ENCODE measurements at regions of chr20 and their contacts with region 1.

Region 1: GRCh38 chr20:59495894-59496510 is 108.3 kb upstream of the PHACTR3 start:
- DNase-seq: peak; percentile 65
- H3K4me3 Mint-ChIP-seq: no peak overlapping the region
- H3K27ac Mint-ChIP-seq: no peak overlapping the region
- H3K4me1 Mint-ChIP-seq: no peaks in the 10 kb centered on the region
- H3K27me3 Mint-ChIP-seq: peaks cover 71% of the 10 kb centered on the region
- CTCF ChIP-seq: peak; percentile 77

Region 2: GRCh38 chr20:58864350-58864749 is 631.7 kb before region 1 on chr20:
- CTCF ChIA-PET with region 1: interaction called, 43 read pairs
- POLR2A ChIA-PET with region 1: no interaction called
- intact Hi-C with region 1: no loop called
- DNase-seq: peak; percentile 21
- H3K4me3 Mint-ChIP-seq: no peak overlapping the region
- H3K27ac Mint-ChIP-seq: no peak overlapping the region
- H3K4me1 Mint-ChIP-seq: no peaks in the 10 kb centered on the region
- H3K27me3 Mint-ChIP-seq: peaks cover 68% of the 10 kb centered on the region
- CTCF ChIP-seq: peak; percentile 9

Region 3: GRCh38 chr20:59063358-59064213 is 432.4 kb before region 1 on chr20:
- CTCF ChIA-PET with region 1: interaction called, 13 read pairs
- POLR2A ChIA-PET with region 1: no interaction called
- intact Hi-C with region 1: no loop called
- DNase-seq: peak; percentile 85
- H3K4me3 Mint-ChIP-seq: peak overlapping the region; percentile 2
- H3K27ac Mint-ChIP-seq: peak overlapping the region; percentile 69
- H3K4me1 Mint-ChIP-seq: peaks cover 10% of the 10 kb centered on the region
- H3K27me3 Mint-ChIP-seq: no peaks in the 10 kb centered on the region
- CTCF ChIP-seq: no peak

Region 4: DNA sequence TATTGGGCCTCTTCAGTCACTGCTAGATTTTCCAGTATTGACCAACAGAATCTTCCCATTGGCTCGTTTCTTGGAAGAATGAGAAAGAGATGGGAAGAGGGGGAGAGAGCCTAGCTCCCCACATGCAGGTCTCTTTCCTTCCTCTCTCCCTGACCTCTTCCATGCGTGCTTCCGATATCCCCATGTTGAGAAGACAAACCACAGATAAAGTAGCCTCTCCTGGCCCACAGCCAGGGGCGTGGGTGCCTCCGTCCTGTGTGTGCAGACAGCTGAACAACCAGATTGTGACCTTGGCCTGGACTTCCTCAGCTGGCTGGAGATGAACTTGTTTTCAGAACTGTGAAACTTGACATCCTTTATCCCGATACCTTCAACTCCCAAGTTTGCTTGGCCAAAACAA is 124.6 kb before region 1 on chr20:
- CTCF ChIA-PET with region 1: no interaction called
- POLR2A ChIA-PET with region 1: no interaction called
- intact Hi-C with region 1: no loop called
- DNase-seq: no peak
- H3K4me3 Mint-ChIP-seq: no peak overlapping the region
- H3K27ac Mint-ChIP-seq: no peak overlapping the region
- H3K4me1 Mint-ChIP-seq: no peaks in the 10 kb centered on the region
- H3K27me3 Mint-ChIP-seq: peaks cover 75% of the 10 kb centered on the region
- CTCF ChIP-seq: no peak

Region 5: GRCh38 chr20:59439243-59439642 is 56.8 kb before region 1 on chr20:
- CTCF ChIA-PET with region 1: interaction called, 14 read pairs
- POLR2A ChIA-PET with region 1: no interaction called
- intact Hi-C with region 1: no loop called
- DNase-seq: peak; percentile 5
- H3K4me3 Mint-ChIP-seq: no peak overlapping the region
- H3K27ac Mint-ChIP-seq: no peak overlapping the region
- H3K4me1 Mint-ChIP-seq: no peaks in the 10 kb centered on the region
- H3K27me3 Mint-ChIP-seq: peaks cover 52% of the 10 kb centered on the region
- CTCF ChIP-seq: no peak

Region 6: GRCh38 chr20:59472059-59472458 is 23.9 kb before region 1 on chr20:
- CTCF ChIA-PET with region 1: interaction called, 27 read pairs
- POLR2A ChIA-PET with region 1: no interaction called
- intact Hi-C with region 1: no loop called
- DNase-seq: no peak
- H3K4me3 Mint-ChIP-seq: no peak overlapping the region
- H3K27ac Mint-ChIP-seq: no peak overlapping the region
- H3K4me1 Mint-ChIP-seq: no peaks in the 10 kb centered on the region
- H3K27me3 Mint-ChIP-seq: peaks cover 71% of the 10 kb centered on the region
- CTCF ChIP-seq: no peak

Region 7: GRCh38 chr20:59508729-59509128 is 12.7 kb after region 1 on chr20:
- CTCF ChIA-PET with region 1: interaction called, 64 read pairs
- POLR2A ChIA-PET with region 1: no interaction called
- intact Hi-C with region 1: no loop called
- DNase-seq: no peak
- H3K4me3 Mint-ChIP-seq: no peak overlapping the region
- H3K27ac Mint-ChIP-seq: no peak overlapping the region
- H3K4me1 Mint-ChIP-seq: no peaks in the 10 kb centered on the region
- H3K27me3 Mint-ChIP-seq: peaks cover 49% of the 10 kb centered on the region
- CTCF ChIP-seq: no peak

Region 8: DNA sequence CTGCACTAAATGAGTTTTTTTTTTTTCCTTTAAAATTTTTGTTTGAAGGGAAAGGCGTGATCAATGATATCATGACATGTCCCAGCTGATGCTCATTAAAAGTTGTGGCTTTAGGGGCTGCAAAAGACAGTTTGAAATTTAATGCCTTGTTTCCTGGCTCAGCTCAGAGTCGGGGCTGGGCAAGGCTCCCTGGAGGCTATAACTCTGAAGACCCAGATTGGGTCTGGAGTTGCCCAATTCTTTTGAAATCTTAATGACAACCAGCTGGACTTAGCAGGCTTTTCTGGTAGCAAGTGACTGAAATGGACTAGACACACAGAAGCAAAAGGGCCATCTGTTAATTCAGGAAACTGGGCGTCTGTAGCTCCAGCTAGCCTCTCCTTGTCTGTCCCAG is 84.5 kb after region 1 on chr20:
- CTCF ChIA-PET with region 1: no interaction called
- POLR2A ChIA-PET with region 1: no interaction called
- intact Hi-C with region 1: no loop called
- DNase-seq: no peak
- H3K4me3 Mint-ChIP-seq: no peak overlapping the region
- H3K27ac Mint-ChIP-seq: no peak overlapping the region
- H3K4me1 Mint-ChIP-seq: no peaks in the 10 kb centered on the region
- H3K27me3 Mint-ChIP-seq: peaks cover 45% of the 10 kb centered on the region
- CTCF ChIP-seq: no peak

Measured in MCF 10A (cell line).